Right ventricle myocardium superior (tissue), 1 donor: ENCODE measurements at regions of chr11 and their contacts with region 1.

Region 1: GRCh38 chr11:84558085-84558905 is 1068.8 kb downstream of the DLG2 start:
- DNase-seq: no peak
- ATAC-seq: peak; percentile 78

Region 2: DNA sequence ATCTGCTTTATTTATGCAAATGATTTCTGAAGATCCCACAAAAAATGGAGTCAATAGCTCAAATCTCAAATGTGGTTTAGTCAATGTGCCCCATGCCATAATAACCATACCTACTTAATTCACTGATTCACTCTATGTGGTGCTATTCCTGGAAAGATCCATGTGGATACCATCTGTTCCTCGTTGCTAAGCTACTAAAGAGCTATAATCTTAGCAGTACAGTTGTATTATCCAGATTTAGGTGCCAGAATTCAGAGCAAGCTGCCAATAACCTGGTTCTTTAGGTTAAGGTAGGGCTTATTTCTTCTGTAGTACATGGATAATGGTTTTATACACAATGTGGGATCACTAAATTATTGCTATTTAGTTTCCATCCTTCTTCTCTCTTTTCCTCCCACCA is 297.4 kb before region 1 on chr11:
- intact Hi-C with region 1: no loop called
- DNase-seq: no peak
- ATAC-seq: no peak

Region 3: GRCh38 chr11:84714316-84714780 is 156.1 kb after region 1 on chr11:
- intact Hi-C with region 1: loop called (anchors 10 kb)
- DNase-seq: peak; percentile 48
- ATAC-seq: peak; percentile 76